Keratinocyte (primary cell): ENCODE measurements at regions of chr5 and their contacts with region 1.

Region 1: GRCh38 chr5:98773464-98774191 is at the start of gene RGMB:
- DNase-seq: peak; percentile 76
- H3K4me3 ChIP-seq: peak within 1 kb of the TSS; percentile 83 to 98 (median 88)
- H3K27ac ChIP-seq: peak within 1 kb of the TSS; percentile 86
- H3K4me1 ChIP-seq: peaks cover 24% of the 10 kb centered on the region
- H3K27me3 ChIP-seq: no peaks in the 10 kb centered on the region
- CTCF ChIP-seq: no peak
- polyA plus RNA-seq, gene RGMB: 8.5 to 28.7 TPM (median 16.3 TPM) in 3 replicates

Region 2: DNA sequence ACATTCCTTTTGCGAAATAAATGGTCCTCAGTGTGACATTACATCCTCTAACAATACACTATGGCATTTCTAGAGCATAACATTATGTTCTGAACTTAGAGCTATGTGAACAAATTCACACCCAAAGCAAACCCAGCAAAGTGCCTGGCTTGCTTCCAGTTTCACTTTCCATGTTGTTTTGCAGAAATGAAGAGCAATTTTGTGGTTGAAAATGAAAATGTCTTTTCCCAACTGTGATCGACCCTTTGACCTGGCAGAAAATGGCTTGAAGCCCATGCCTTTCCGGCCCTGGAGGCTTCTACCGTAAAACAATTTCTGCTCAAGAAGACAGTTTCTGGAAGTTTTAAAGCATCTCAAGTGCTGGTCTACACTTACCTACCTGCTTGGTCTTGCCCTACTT is 344.8 kb before region 1 on chr5:
- dilution Hi-C with region 1: loop called (anchors 25 kb)
- DNase-seq: no peak
- H3K4me3 ChIP-seq: no peak overlapping the region
- H3K27ac ChIP-seq: no peak overlapping the region
- H3K4me1 ChIP-seq: peaks cover 2% of the 10 kb centered on the region
- H3K27me3 ChIP-seq: no peaks in the 10 kb centered on the region
- CTCF ChIP-seq: no peak

Region 3: DNA sequence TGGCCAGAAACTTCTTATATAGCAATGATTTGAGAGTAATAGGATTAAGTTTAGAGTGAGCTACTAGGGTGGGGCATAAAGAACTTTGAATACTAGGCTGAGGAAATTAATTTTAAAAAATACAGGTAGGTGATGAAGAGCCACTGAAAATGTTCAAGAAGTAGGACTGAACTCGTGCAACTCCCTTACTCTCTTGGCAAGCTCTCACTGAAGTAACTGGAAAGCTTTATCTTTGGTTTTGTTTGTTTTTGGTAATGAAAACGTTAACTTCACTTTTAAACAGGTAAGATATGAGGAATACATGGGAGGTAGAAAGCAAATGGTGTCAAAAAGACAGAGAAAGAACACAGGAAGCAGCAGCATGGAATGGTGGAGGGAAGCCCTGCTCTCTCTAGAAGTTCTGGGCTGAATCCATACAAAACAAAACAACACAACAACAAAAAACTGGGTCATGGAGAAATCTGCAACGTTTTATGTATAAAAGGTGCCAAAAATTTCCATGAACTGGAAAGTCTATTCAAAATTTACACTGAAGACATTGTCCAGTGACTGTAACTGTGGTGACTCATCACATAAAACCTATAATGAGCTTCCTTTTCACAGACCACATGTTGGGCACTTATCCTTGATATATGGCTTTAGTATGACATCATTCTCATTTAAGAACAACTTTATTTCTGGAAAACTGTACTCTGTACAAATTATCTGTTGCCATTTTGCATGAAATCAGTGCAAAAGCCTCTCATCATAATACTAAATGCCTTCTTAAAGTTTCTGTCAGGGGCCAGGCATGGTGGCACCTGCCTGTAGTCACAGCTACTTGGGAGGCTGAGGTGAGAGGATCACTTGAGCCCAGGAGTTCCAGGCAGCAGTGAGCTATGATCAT is 246.4 kb after region 1 on chr5:
- dilution Hi-C with region 1: no loop called
- DNase-seq: no peak
- H3K4me3 ChIP-seq: no peak overlapping the region
- H3K27ac ChIP-seq: no peak overlapping the region
- H3K4me1 ChIP-seq: peaks cover 8% of the 10 kb centered on the region
- H3K27me3 ChIP-seq: no peaks in the 10 kb centered on the region
- CTCF ChIP-seq: no peak